ENCODE measurements at regions of chr12 and their contacts with region 1.

Region 1: DNA sequence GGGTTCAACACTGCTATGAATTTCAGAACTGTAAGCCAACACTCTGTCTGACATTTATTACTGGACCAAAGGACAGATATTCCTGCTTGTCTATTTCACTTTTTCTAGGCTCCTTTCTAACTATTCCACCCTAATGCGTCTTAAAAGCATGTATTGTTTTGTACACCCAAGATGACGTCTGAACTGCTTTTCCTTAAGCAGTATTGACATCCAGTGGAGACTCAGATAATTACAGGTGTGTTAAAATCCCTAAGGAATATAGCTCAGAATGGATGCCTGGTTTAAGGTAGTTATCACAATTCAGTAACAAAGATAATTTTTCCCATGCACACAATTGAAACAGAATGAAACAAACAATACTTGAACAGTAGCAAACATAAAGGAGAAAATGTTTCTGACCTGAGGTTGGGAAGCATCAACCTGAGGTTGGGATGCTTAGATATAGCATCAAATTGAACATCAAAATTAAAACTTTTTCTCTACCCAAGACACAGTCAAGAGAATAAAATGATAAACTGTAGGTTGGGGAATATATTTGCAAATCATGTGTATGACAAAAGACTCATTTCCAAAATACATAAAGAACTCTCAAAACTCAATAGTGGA is 93.7 kb upstream of the PTPRR start:
- DNase-seq: peak; percentile 51
- ATAC-seq: peak; percentile 83
- H3K4me3 ChIP-seq: no peak overlapping the region
- H3K27ac ChIP-seq: no peak overlapping the region
- H3K4me1 ChIP-seq: peaks cover 0 to 5% of the 10 kb centered on the region in 2 experiments; a peak in 1 of 4 replicates
- H3K27me3 ChIP-seq: no peaks in the 10 kb centered on the region
- CTCF ChIP-seq: peak; percentile 34 to 75 (median 68); a peak in 4 of 6 replicates
- POLR2A ChIP-seq: no peak
- RAD21 ChIP-seq: peak; percentile 90

Region 2: GRCh38 chr12:70671698-70672097 is 342.6 kb before region 1 on chr12:
- CTCF ChIA-PET with region 1: no interaction called
- POLR2A ChIA-PET with region 1: no interaction called
- RAD21 ChIA-PET with region 1: no interaction called
- intact Hi-C with region 1: no loop called
- DNase-seq: no peak
- ATAC-seq: no peak
- H3K4me3 ChIP-seq: no peak overlapping the region
- H3K27ac ChIP-seq: no peak overlapping the region
- H3K4me1 ChIP-seq: no peaks in the 10 kb centered on the region
- H3K27me3 ChIP-seq: no peaks in the 10 kb centered on the region
- CTCF ChIP-seq: no peak
- POLR2A ChIP-seq: no peak
- RAD21 ChIP-seq: no peak

Region 3: GRCh38 chr12:70849265-70849960 is 164.9 kb before region 1 on chr12:
- CTCF ChIA-PET with region 1: interaction called, 12 read pairs
- POLR2A ChIA-PET with region 1: no interaction called
- RAD21 ChIA-PET with region 1: no interaction called
- intact Hi-C with region 1: loop called (anchors 5 kb)
- DNase-seq: peak; percentile 16
- ATAC-seq: peak; percentile 44; the same call in 1 of the 2 replicates
- H3K4me3 ChIP-seq: no peak overlapping the region
- H3K27ac ChIP-seq: no peak overlapping the region
- H3K4me1 ChIP-seq: no peaks in the 10 kb centered on the region
- H3K27me3 ChIP-seq: no peaks in the 10 kb centered on the region
- CTCF ChIP-seq: peak; percentile 27 to 70 (median 59); a peak in 4 of 6 replicates
- POLR2A ChIP-seq: no peak
- RAD21 ChIP-seq: peak; percentile 74

Region 4: GRCh38 chr12:72511498-72511897 is 1497.2 kb after region 1 on chr12:
- CTCF ChIA-PET with region 1: no interaction called
- POLR2A ChIA-PET with region 1: no interaction called
- RAD21 ChIA-PET with region 1: no interaction called
- intact Hi-C with region 1: no loop called
- DNase-seq: no peak
- ATAC-seq: no peak
- H3K4me3 ChIP-seq: no peak overlapping the region
- H3K27ac ChIP-seq: no peak overlapping the region
- H3K4me1 ChIP-seq: no peaks in the 10 kb centered on the region
- H3K27me3 ChIP-seq: no peaks in the 10 kb centered on the region
- CTCF ChIP-seq: no peak
- POLR2A ChIP-seq: no peak
- RAD21 ChIP-seq: no peak